AG04450 (cell line): ENCODE measurements at regions of chr17 and their contacts with region 1.

Region 1: GRCh38 chr17:48546924-48547807 is 2.3 kb upstream of the HOXB2 start:
- DNase-seq: no peak
- H3K4me3 ChIP-seq: peak overlapping the region; percentile 47
- H3K27ac ChIP-seq: peak overlapping the region; percentile 84
- H3K27me3 ChIP-seq: no peaks in the 10 kb centered on the region
- CTCF ChIP-seq: no peak

Region 2: GRCh38 chr17:48427598-48427997 is 119.6 kb before region 1 on chr17:
- CTCF ChIA-PET with region 1: no interaction called
- POLR2A ChIA-PET with region 1: interaction called, 11 read pairs
- DNase-seq: no peak
- H3K4me3 ChIP-seq: no peak overlapping the region
- H3K27ac ChIP-seq: no peak overlapping the region
- H3K27me3 ChIP-seq: peaks cover 32% of the 10 kb centered on the region
- CTCF ChIP-seq: no peak

Region 3: GRCh38 chr17:48463526-48463925 is 83.6 kb before region 1 on chr17:
- CTCF ChIA-PET with region 1: no interaction called
- POLR2A ChIA-PET with region 1: no interaction called
- DNase-seq: no peak
- H3K4me3 ChIP-seq: no peak overlapping the region
- H3K27ac ChIP-seq: no peak overlapping the region
- H3K27me3 ChIP-seq: peaks cover 12% of the 10 kb centered on the region
- CTCF ChIP-seq: no peak

Region 4: DNA sequence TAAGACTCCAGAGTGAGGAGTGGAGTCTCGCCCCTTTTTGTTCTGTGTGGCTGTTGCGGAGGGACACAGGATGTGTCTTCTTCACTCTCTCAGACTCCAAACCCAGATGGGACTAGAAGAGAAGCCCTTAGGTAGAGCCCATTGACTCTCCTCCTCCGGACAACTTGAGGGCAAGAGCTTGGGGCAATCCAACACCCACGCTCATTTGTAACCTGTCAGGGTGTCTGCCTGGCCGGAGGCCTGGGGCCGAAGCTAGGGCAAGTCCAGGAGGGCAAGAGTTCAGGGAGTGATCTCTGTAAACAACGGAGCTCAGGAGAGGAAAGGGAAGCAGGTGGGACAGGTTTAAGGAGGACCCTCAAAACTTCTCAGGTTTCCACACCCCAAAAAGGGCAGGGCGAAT is 14.9 kb before region 1 on chr17:
- CTCF ChIA-PET with region 1: no interaction called
- POLR2A ChIA-PET with region 1: no interaction called
- DNase-seq: no peak
- H3K4me3 ChIP-seq: no peak overlapping the region
- H3K27ac ChIP-seq: no peak overlapping the region
- H3K27me3 ChIP-seq: no peaks in the 10 kb centered on the region
- CTCF ChIP-seq: no peak

Region 5: GRCh38 chr17:48586355-48587258 is 39.4 kb after region 1 on chr17:
- CTCF ChIA-PET with region 1: interaction called, 4 read pairs
- POLR2A ChIA-PET with region 1: interaction called, 12 read pairs
- DNase-seq: no peak
- H3K4me3 ChIP-seq: peak overlapping the region; percentile 89
- H3K27ac ChIP-seq: peak overlapping the region; percentile 97
- H3K27me3 ChIP-seq: no peaks in the 10 kb centered on the region
- CTCF ChIP-seq: no peak